ENCODE measurements at regions of chr9 and their contacts with region 1.

Region 1: GRCh38 chr9:134449221-134449894 is 123.1 kb downstream of the RXRA start:
- DNase-seq: peak; percentile 82
- H3K4me3 ChIP-seq: no peak overlapping the region
- H3K27ac ChIP-seq: no peak overlapping the region
- H3K4me1 ChIP-seq: no peaks in the 10 kb centered on the region
- H3K27me3 ChIP-seq: no peaks in the 10 kb centered on the region
- CTCF ChIP-seq: peak; percentile 79 to 89

Region 2: GRCh38 chr9:134641173-134641985 is 192.0 kb after region 1 on chr9 and contains the start of gene COL5A1:
- CTCF ChIA-PET with region 1: no interaction called
- dilution Hi-C with region 1: no loop called
- in situ Hi-C with region 1: no loop called
- intact Hi-C with region 1: loop called (anchors 2 kb)
- DNase-seq: peak; percentile 86
- H3K4me3 ChIP-seq: peak within 1 kb of the TSS in 2 of 3 experiments; percentile 30 to 32
- H3K27ac ChIP-seq: no peak within 1 kb of the TSS
- H3K4me1 ChIP-seq: peaks cover 5% of the 10 kb centered on the region
- H3K27me3 ChIP-seq: peaks cover 4% of the 10 kb centered on the region
- CTCF ChIP-seq: no peak
- total RNA-seq, gene COL5A1: 7.2 to 22.8 TPM

Region 3: DNA sequence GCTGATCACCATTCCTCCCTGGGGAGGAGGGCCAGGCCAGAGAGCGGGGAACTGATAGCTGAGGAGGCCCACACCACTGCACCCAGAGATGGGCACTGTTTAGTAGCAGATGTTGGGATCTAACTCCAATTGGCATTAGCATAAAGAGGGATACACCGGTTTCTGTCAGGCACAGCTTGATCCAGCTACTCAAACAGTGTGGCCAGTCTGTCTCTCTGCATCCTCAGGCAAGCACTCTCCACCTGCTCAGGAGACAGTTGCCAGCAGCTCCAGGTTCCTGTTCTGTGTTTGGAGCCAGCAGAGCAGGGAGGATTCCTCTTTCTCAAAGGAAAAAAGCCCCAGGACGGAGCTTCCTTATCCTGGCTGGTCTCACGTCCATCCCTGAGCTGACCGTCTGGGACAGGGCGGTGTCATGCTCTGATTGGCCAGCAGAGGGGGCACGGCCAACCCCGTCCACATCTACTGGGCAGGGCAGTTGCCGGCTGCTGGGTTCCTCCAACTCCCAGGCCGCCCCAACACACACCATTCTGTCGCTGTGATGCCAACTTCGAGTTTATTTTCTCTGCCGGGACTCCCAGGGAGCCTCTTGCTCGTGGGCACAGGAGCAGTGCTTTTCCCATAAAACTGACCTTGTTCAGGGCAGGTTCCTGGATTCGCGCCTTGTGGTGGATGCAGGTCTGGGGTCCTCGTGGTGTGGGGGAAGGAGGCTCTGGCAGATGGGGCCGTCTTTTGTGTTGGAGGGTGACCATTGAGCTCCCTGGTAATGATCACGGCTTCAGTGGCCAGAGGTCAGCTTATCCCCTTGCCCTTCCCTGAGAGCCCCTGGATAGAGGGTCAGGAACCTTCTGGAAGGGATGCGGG is 240.2 kb after region 1 on chr9:
- CTCF ChIA-PET with region 1: no interaction called
- dilution Hi-C with region 1: no loop called
- in situ Hi-C with region 1: no loop called
- intact Hi-C with region 1: loop called (anchors 1 kb)
- DNase-seq: peak; percentile 32
- H3K4me3 ChIP-seq: no peak overlapping the region
- H3K27ac ChIP-seq: no peak overlapping the region
- H3K4me1 ChIP-seq: no peaks in the 10 kb centered on the region
- H3K27me3 ChIP-seq: no peaks in the 10 kb centered on the region
- CTCF ChIP-seq: peak; percentile 27 to 51

Region 4: DNA sequence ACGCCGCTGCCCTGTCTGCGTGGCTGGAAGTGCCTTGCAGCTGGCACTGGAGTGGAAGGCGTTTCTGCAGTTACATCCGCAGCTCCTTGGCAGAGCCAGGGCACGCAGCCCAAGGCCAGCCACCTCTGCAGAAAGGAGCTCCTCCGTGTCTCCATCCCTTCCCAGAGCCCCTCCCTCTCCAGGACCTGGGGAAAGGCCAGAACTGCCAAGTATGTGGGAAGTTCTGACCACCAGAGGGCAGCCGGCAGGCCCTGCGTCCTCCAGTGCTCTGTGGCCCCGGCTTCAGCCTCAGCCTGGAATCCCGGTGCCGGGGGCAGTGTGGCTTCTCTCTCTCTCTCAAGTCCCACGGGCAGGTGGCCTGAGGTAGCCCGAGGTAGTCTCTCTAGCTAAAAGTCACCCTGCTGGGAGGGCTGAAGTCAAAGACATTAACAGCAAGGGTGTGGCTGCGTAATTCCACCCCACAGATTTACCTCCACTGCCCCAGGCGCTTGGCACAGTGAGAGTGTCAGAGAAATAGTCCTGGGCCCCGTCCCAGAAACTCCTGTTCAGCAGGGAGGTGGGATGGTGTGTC is 329.6 kb after region 1 on chr9:
- CTCF ChIA-PET with region 1: no interaction called
- dilution Hi-C with region 1: no loop called
- in situ Hi-C with region 1: no loop called
- intact Hi-C with region 1: loop called (anchors 1 kb)
- DNase-seq: peak; percentile 29
- H3K4me3 ChIP-seq: no peak overlapping the region
- H3K27ac ChIP-seq: no peak overlapping the region
- H3K4me1 ChIP-seq: no peaks in the 10 kb centered on the region
- H3K27me3 ChIP-seq: no peaks in the 10 kb centered on the region
- CTCF ChIP-seq: peak; percentile 14 to 49

Region 5: GRCh38 chr9:135085830-135086546 is 636.6 kb after region 1 on chr9:
- CTCF ChIA-PET with region 1: no interaction called
- dilution Hi-C with region 1: no loop called
- in situ Hi-C with region 1: no loop called
- intact Hi-C with region 1: loop called (anchors 1 kb)
- DNase-seq: peak; percentile 33
- H3K4me3 ChIP-seq: no peak overlapping the region
- H3K27ac ChIP-seq: no peak overlapping the region
- H3K4me1 ChIP-seq: no peaks in the 10 kb centered on the region
- H3K27me3 ChIP-seq: peaks cover 17% of the 10 kb centered on the region
- CTCF ChIP-seq: peak; percentile 53 to 73

Measured in mammary epithelial cell (primary cell).